Heart right ventricle (tissue), 16 donors: ENCODE measurements at regions of chr19 and their contacts with region 1.

Region 1: GRCh38 chr19:13880059-13881043 is 3.4 kb downstream of the NANOS3 start:
- DNase-seq: peak; percentile 97 to 99
- ATAC-seq: peak; percentile 95 to 97 (median 97)
- H3K4me3 ChIP-seq: peak overlapping the region in 7 of 10 donors; percentile 22 to 37 (median 29)
- H3K27ac ChIP-seq: peak overlapping the region in 9 of 10 donors; percentile 5 to 87 (median 70)
- H3K4me1 ChIP-seq: peaks cover 0 to 36% (median 28%) of the 10 kb centered on the region in 9 donors
- H3K27me3 ChIP-seq: no peaks in the 10 kb centered on the region
- CTCF ChIP-seq: peak in 8 of 9 donors; percentile 99 to 100 (median 99)

Region 2: GRCh38 chr19:13938301-13939064 is 58.1 kb after region 1 on chr19 and contains the start of gene PODNL1:
- intact Hi-C with region 1: no loop called
- DNase-seq: no peak
- ATAC-seq: peak in 7 of 8 donors; percentile 16 to 75 (median 61)
- H3K4me3 ChIP-seq: peak within 1 kb of the TSS in 6 of 10 donors; percentile 21 to 46 (median 26)
- H3K27ac ChIP-seq: no peak within 1 kb of the TSS
- H3K4me1 ChIP-seq: peaks cover 0 to 5% (median 0%) of the 10 kb centered on the region in 9 donors
- H3K27me3 ChIP-seq: peaks cover 0 to 32% (median 19%) of the 10 kb centered on the region in 7 donors
- CTCF ChIP-seq: no peak
- total RNA-seq, gene PODNL1: 0.76 to 6.2 (median 1.8) TPM

Region 3: GRCh38 chr19:13952154-13953035 is 72.0 kb after region 1 on chr19 and contains the start of gene DCAF15:
- intact Hi-C with region 1: loop called in 3 of 10 experiments (anchors 2 to 5 kb)
- DNase-seq: peak; percentile 99 to 100
- ATAC-seq: peak; percentile 97 to 99 (median 98)
- H3K4me3 ChIP-seq: peak within 1 kb of the TSS; percentile 48 to 84 (median 76)
- H3K27ac ChIP-seq: peak within 1 kb of the TSS; percentile 57 to 90 (median 84)
- H3K4me1 ChIP-seq: peaks cover 8 to 29% (median 15%) of the 10 kb centered on the region in 9 donors
- H3K27me3 ChIP-seq: no peaks in the 10 kb centered on the region
- CTCF ChIP-seq: no peak
- total RNA-seq, gene DCAF15: 15.5 to 21.2 (median 17.8) TPM

Region 4: GRCh38 chr19:14048443-14049153 is 168.2 kb after region 1 on chr19:
- intact Hi-C with region 1: loop called in 5 of 10 experiments (anchors 1 to 10 kb)
- DNase-seq: peak; percentile 42 to 67
- ATAC-seq: peak in 6 of 8 donors; percentile 41 to 71 (median 60)
- H3K4me3 ChIP-seq: no peak overlapping the region
- H3K27ac ChIP-seq: no peak overlapping the region
- H3K4me1 ChIP-seq: no peaks in the 10 kb centered on the region
- H3K27me3 ChIP-seq: no peaks in the 10 kb centered on the region
- CTCF ChIP-seq: peak; percentile 64 to 95 (median 81)

Region 5: DNA sequence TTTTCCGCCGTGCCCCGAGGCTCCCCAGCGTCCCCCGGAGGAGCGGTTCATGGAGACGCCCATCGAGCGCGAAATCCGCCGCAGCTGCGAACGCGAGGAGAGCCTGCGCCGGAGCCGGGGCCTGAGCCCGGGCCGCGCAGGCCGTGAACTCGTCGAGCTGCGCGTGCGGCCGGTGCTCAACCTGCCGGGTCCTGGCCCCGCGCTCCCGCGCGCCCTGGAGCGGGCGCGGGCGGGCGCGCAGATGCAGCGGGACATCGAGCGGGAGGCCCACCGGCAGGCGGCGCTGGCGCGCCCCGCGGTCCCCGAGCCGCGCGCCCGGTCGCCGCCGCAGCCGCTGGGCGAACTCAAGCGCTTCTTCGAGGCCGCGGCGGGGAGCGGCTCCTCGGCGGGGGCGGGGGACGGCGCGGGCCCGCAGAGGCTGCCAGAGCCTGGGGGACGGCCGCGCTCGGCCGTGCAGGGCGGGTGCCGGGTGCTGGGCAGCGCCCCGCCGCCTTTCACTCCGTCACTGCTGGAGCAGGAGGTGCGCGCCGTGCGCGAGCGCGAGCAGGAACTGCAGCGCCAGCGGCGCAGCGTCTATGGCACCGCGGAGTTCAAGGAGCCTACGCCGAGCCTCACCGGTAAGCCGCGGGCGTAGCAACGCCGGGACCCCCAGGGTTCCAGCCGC is 193.0 kb after region 1 on chr19:
- intact Hi-C with region 1: loop called (anchors 1 to 5 kb)
- DNase-seq: peak; percentile 66 to 82
- ATAC-seq: peak; percentile 40 to 61 (median 52)
- H3K4me3 ChIP-seq: peak overlapping the region; percentile 71 to 97 (median 82)
- H3K27ac ChIP-seq: peak overlapping the region; percentile 87 to 97 (median 90)
- H3K4me1 ChIP-seq: peaks cover 11 to 49% (median 37%) of the 10 kb centered on the region in 9 donors
- H3K27me3 ChIP-seq: peaks cover 0 to 10% (median 0%) of the 10 kb centered on the region in 7 donors
- CTCF ChIP-seq: peak in 7 of 9 donors; percentile 25 to 86 (median 67)

Region 6: DNA sequence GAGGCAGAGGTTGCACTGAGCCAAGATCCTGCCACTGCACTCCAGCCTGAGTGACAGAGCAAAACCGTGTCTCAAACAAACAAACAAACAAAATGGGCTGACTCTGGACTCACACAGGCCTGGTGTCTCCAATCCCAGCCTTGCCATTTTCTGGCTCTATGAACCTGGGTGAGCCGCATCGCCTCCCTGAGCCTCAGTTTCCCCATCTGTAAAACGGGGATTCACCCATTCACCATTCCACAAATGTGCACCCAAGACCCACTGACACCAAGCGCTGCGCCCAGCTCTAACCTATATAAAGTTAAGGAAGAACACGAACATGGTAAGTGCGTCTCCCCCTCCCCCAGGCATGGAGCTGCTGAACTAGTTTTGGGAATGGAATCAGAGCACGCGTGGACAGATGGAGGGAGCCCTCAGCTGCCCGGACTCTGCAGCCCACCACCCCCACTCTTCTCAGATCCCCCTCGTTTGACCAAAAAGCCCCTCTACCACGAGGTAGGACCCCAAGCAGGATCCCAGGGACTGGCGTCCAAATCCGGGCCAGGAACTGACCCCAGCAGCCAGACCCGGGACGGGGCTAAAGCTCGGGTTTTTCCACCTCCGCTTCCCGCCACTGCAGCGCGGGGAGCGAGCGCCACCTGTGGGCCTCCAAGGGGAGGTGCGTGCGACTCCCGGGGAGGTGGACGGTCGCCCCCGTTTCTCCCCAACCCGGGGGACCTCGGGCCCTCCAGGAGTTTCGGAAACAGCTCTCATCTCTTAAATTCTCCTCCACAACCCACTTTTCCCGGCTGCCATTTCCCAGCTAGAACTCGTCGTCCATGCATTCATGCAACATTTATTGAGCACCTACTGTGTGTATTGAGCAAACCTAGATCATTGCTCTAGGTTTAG is 467.9 kb after region 1 on chr19:
- intact Hi-C with region 1: loop called in 3 of 10 experiments (anchors 5 to 10 kb)
- DNase-seq: peak; percentile 61 to 75
- ATAC-seq: peak; percentile 72 to 90 (median 84)
- H3K4me3 ChIP-seq: peak overlapping the region in 8 of 10 donors; percentile 14 to 37 (median 28)
- H3K27ac ChIP-seq: no peak overlapping the region
- H3K4me1 ChIP-seq: peaks cover 0 to 12% (median 0%) of the 10 kb centered on the region in 9 donors
- H3K27me3 ChIP-seq: peaks cover 0 to 4% (median 0%) of the 10 kb centered on the region in 7 donors
- CTCF ChIP-seq: peak; percentile 93 to 99 (median 96)